Posterior vena cava (tissue), 2 donors: ENCODE measurements at regions of chr7 and their contacts with region 1.

Region 1: GRCh38 chr7:98168181-98168905 is 42.9 kb upstream of the BHLHA15 start:
- DNase-seq: no peak

Region 2: GRCh38 chr7:98021588-98022351 is 146.6 kb before region 1 on chr7:
- intact Hi-C with region 1: loop called in 1 of 2 experiments (anchors 5 kb)
- DNase-seq: peak; percentile 94

Region 3: GRCh38 chr7:98106647-98107445 is 61.5 kb before region 1 on chr7 and contains the start of gene LMTK2:
- intact Hi-C with region 1: loop called (anchors 1 to 5 kb)
- DNase-seq: peak; percentile 99
- total RNA-seq, gene LMTK2: 13.0 to 17.9 TPM

Region 4: DNA sequence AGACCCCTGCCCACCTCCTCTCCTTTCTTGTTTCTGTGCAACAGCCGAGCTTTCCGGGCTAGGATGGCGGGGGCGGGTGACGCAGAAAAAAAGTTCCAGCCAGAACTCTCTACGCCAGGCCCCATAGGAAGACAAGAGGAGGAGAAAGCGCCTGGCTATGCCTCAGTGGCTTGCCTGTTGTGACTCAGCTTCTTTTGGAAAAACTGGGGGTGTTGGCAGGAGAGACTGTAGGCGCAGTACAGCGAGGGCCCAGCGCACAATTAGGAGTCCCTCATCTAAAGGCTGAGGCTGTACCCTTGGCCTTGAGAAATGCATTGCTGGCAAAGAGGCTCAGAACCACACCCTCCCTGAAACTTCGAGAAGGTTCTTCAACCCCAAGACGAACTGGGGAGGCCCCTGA is 1067.6 kb after region 1 on chr7:
- intact Hi-C with region 1: no loop called
- DNase-seq: no peak